ENCODE measurements at regions of chr6 and their contacts with region 1.

Region 1: GRCh38 chr6:31619805-31620585 is 520 bp upstream of the PRRC2A start:
- DNase-seq: peak; percentile 97 to 99
- ATAC-seq: peak; percentile 86 to 87
- H3K4me3 ChIP-seq: peak overlapping the region; percentile 62 to 95 (median 82)
- H3K27ac ChIP-seq: peak overlapping the region; percentile 91 to 97 (median 96)
- H3K4me1 ChIP-seq: peaks cover 19 to 21% of the 10 kb centered on the region in 2 donors
- H3K27me3 ChIP-seq: no peaks in the 10 kb centered on the region
- CTCF ChIP-seq: no peak
- POLR2A ChIP-seq: peak; percentile 69 to 90

Region 2: GRCh38 chr6:31546962-31547726 is 72.9 kb before region 1 on chr6 and contains the start of gene NFKBIL1:
- in situ Hi-C with region 1: no loop called
- intact Hi-C with region 1: loop called (anchors 2 kb)
- DNase-seq: peak; percentile 96
- ATAC-seq: peak; percentile 97 to 98
- H3K4me3 ChIP-seq: peak within 1 kb of the TSS; percentile 48 to 72 (median 63)
- H3K27ac ChIP-seq: peak within 1 kb of the TSS; percentile 86 to 97 (median 90)
- H3K4me1 ChIP-seq: peaks cover 20 to 22% of the 10 kb centered on the region in 2 donors
- H3K27me3 ChIP-seq: no peaks in the 10 kb centered on the region
- CTCF ChIP-seq: peak in 1 of 5 experiments; percentile 13
- POLR2A ChIP-seq: peak; percentile 64 to 68
- total RNA-seq, gene NFKBIL1: 17.6 to 21.7 (median 20.3) TPM

Region 3: GRCh38 chr6:31652925-31653718 is 33.1 kb after region 1 on chr6:
- in situ Hi-C with region 1: no loop called
- intact Hi-C with region 1: loop called (anchors 1 kb)
- DNase-seq: peak; percentile 81 to 88
- ATAC-seq: peak; percentile 83 to 87
- H3K4me3 ChIP-seq: peak overlapping the region; percentile 79 to 90 (median 84)
- H3K27ac ChIP-seq: peak overlapping the region; percentile 95 to 99 (median 98)
- H3K4me1 ChIP-seq: peaks cover 23 to 24% of the 10 kb centered on the region in 2 donors
- H3K27me3 ChIP-seq: no peaks in the 10 kb centered on the region
- CTCF ChIP-seq: no peak
- POLR2A ChIP-seq: peak; percentile 55 to 78

Region 4: DNA sequence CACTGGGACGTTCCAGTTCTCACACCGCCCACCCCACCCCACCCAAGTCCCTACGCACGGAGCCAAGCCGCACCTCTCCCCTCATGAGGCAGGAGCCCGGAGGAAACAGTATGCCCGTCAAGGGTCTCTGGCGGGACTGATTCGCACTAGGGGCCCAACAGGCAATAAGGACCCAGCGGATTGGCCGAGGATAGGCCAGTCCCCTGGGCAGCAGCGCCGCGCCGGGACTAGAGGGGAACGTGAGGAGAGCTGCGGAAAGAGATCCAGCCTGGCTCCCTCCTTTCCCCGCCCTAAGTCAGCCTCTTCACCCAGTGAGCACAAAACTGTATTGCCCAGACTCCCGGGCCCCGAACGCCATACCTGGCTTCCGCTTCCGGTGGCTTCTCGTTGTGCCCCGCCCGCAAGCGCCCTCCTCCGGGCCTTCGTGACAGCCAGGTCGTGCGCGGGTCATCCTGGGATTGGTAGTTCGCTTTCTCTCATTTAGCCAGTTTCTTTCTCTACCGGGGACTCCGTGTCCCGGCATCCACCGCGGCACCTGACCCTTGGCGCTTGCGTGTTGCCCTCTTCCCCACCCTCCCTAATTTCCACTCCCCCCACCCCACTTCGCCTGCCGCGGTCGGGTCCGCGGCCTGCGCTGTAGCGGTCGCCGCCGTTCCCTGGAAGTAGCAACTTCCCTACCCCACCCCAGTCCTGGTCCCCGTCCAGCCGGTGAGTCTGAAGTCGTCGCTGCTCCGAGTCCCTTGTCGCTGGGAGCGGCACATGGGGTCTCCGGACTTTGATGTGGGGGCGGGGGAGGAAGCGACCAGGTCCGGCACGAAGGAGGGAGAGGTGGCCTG is 45.7 kb after region 1 on chr6 and contains the start of gene CSNK2B:
- in situ Hi-C with region 1: no loop called
- intact Hi-C with region 1: loop called (anchors 1 kb)
- DNase-seq: peak; percentile 99
- ATAC-seq: peak; percentile 86
- H3K4me3 ChIP-seq: peak within 1 kb of the TSS; percentile 83 to 98 (median 94)
- H3K27ac ChIP-seq: peak within 1 kb of the TSS; percentile 93 to 100 (median 97)
- H3K4me1 ChIP-seq: peaks cover 25 to 36% of the 10 kb centered on the region in 2 donors
- H3K27me3 ChIP-seq: no peaks in the 10 kb centered on the region
- CTCF ChIP-seq: peak in 1 of 5 experiments; percentile 19
- POLR2A ChIP-seq: peak; percentile 72
- total RNA-seq, gene CSNK2B: 185 to 251 (median 226) TPM

Region 5: DNA sequence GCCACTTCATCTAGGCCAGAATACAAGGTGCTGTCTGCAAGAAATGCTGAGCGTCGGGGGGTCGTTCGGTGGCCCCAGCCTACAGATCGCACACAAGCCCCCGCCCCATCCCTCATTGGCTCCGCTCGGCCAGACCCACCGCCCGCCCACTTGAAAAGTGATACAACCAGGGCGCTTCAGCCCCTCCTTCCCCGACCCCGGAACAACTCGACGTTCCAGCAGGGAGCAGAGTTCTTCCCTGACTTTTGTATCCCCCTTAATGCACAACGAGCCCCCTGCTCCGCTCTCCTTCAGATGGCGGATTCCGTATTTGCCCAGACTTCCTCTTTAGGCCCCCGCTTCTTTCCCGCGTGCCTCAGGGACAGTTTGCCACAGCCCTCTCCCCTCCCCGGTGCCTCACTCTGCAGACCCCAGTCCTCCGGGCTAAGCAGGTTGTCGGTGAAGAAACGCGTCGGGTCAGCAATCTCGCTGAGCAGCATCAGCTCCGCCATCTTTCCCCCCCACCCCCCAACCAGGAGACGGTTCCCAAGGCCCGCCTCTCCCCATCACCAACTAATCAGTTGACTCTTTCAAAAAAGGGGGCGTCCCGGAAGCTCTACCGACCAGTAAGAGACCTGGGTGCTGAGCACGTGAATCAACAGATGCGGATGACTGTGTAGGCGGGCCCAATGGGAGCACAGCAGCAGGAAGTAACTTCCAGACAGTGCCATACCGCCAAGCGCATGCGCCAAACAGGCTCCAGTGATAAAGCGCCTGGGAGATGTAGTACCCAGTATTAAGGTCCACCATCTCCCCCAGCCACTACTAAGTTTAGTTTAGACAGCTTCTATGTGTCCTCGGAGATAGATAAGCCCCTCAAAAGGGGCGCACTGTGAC is 508.0 kb after region 1 on chr6 and contains the start of gene ATF6B:
- in situ Hi-C with region 1: no loop called
- intact Hi-C with region 1: loop called (anchors 1 kb)
- DNase-seq: peak; percentile 100
- ATAC-seq: peak; percentile 95 to 96
- H3K4me3 ChIP-seq: peak within 1 kb of the TSS; percentile 91 to 99 (median 96)
- H3K27ac ChIP-seq: peak within 1 kb of the TSS; percentile 89 to 93 (median 92)
- H3K4me1 ChIP-seq: peaks cover 24 to 26% of the 10 kb centered on the region in 2 donors
- H3K27me3 ChIP-seq: no peaks in the 10 kb centered on the region
- CTCF ChIP-seq: no peak
- POLR2A ChIP-seq: peak; percentile 57 to 67
- total RNA-seq, gene ATF6B: 6.8 to 18.4 (median 9.5) TPM

Measured in gastrocnemius medialis (tissue), 4 donors.